ENCODE measurements at regions of chr2 and their contacts with region 1.

Region 1: DNA sequence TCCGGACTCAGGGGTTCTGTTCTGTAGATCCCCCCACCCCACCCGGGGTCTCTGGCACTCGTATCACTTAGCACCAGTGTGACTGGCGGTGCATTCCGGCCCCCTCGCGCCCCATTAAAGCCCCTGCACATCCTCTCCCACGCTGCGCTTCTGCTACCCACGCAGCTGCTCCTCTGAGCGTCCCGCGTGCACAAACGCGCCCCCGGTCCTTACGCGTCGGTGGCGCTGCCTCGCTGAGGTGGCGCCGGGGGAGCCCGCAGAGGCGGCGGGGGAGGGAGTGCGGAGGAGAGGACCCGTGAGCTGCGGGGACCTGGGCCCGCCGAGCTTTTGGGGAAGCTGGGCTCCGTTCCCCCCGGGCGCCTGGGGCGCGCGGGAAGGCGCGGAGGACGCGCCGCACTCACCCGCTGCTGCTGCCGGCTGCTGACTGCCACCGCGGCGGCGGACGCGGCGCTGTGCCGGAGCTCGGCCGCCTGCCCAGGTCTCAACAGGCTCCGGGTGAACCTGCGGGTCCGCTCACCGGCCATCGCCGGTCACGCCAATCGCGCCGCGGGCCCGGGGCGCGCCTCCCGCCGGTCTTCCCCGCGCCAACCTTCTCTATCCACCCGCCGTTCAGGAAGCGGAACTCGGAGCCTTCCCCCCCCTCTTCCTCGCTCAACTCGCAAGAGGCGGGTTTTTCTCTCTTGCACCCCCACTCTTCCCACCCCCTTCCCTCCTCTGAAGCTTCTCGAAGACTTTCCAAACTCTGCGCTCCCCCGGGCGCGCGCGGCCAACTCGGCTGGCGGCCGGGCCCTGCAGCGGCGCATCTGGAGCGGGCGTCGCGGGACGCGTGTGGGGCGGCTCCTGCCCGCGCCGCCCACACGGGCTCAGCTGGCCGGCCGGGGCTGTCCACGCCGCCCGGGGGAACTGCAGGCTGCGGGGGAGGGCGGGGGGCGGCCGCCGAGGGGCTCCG is at the start of gene DOCK10:
- DNase-seq: peak; percentile 60
- ATAC-seq: peak; percentile 48
- H3K4me3 Mint-ChIP-seq: peak within 1 kb of the TSS; percentile 98
- H3K27ac Mint-ChIP-seq: peak within 1 kb of the TSS; percentile 98
- H3K4me1 Mint-ChIP-seq: peaks cover 50% of the 10 kb centered on the region
- H3K27me3 Mint-ChIP-seq: peaks cover 15% of the 10 kb centered on the region
- total RNA-seq, gene DOCK10: 343 to 344 TPM

Region 2: DNA sequence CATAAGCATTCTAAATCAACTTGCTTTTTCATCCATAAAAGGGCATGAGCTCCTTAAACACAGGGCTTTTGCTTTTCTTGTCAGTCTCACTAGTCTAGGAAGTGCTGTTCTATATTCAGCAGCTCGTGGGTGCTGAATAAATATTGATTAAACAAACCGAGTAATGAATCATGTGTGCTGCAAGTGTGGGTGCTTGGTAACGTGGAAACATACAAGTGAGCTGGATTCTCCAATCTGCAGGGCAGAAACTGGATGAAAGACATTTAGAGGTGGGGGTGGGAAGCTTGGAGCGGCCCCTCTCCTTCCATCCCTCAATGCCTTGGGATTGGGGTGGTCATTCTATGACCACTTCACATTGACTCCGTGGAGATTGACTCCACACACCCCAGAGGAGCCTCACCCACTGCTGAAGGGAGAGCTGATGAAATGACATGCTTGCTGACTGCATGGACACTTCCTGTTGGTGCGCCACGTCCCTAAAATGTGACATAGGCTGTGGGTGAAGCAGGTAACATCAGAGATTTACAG is 114.4 kb before region 1 on chr2:
- CTCF ChIA-PET with region 1: interaction called, 10 read pairs
- POLR2A ChIA-PET with region 1: interaction called, 37 read pairs
- DNase-seq: peak; percentile 91
- ATAC-seq: peak; percentile 75
- H3K4me3 Mint-ChIP-seq: peak overlapping the region; percentile 64
- H3K27ac Mint-ChIP-seq: peak overlapping the region; percentile 100
- H3K4me1 Mint-ChIP-seq: peaks cover 99% of the 10 kb centered on the region
- H3K27me3 Mint-ChIP-seq: no peaks in the 10 kb centered on the region

Region 3: GRCh38 chr2:225008935-225009334 is 33.2 kb before region 1 on chr2:
- CTCF ChIA-PET with region 1: interaction called, 31 read pairs
- POLR2A ChIA-PET with region 1: interaction called, 5 read pairs
- DNase-seq: no peak
- ATAC-seq: no peak
- H3K4me3 Mint-ChIP-seq: no peak overlapping the region
- H3K27ac Mint-ChIP-seq: peak overlapping the region; percentile 48
- H3K4me1 Mint-ChIP-seq: peaks cover 81% of the 10 kb centered on the region
- H3K27me3 Mint-ChIP-seq: no peaks in the 10 kb centered on the region

Region 4: GRCh38 chr2:225052703-225053102 is 10.6 kb after region 1 on chr2:
- CTCF ChIA-PET with region 1: interaction called, 53 read pairs
- POLR2A ChIA-PET with region 1: interaction called, 155 read pairs
- DNase-seq: peak; percentile 74
- ATAC-seq: peak; percentile 91
- H3K4me3 Mint-ChIP-seq: peak overlapping the region; percentile 48
- H3K27ac Mint-ChIP-seq: peak overlapping the region; percentile 85
- H3K4me1 Mint-ChIP-seq: peaks cover 71% of the 10 kb centered on the region
- H3K27me3 Mint-ChIP-seq: no peaks in the 10 kb centered on the region

Region 5: GRCh38 chr2:225458431-225459117 is 416.4 kb after region 1 on chr2:
- CTCF ChIA-PET with region 1: no interaction called
- POLR2A ChIA-PET with region 1: no interaction called
- DNase-seq: no peak
- ATAC-seq: no peak
- H3K4me3 Mint-ChIP-seq: no peak overlapping the region
- H3K27ac Mint-ChIP-seq: no peak overlapping the region
- H3K4me1 Mint-ChIP-seq: no peaks in the 10 kb centered on the region
- H3K27me3 Mint-ChIP-seq: peaks cover 2% of the 10 kb centered on the region